Uterus (tissue), 4 donors: ENCODE measurements at regions of chr14 and their contacts with region 1.

Region 1: GRCh38 chr14:76947078-76947837 is 81.2 kb downstream of the IRF2BPL start:
- DNase-seq: peak; percentile 84 to 85
- H3K4me3 ChIP-seq: no peak overlapping the region
- H3K27ac ChIP-seq: peak overlapping the region; percentile 69 to 79
- H3K4me1 ChIP-seq: peaks cover 0 to 16% of the 10 kb centered on the region in 2 donors
- H3K27me3 ChIP-seq: no peaks in the 10 kb centered on the region
- CTCF ChIP-seq: peak; percentile 47 to 64 (median 52)
- POLR2A ChIP-seq: peak in 1 of 2 donors; percentile 8

Region 2: DNA sequence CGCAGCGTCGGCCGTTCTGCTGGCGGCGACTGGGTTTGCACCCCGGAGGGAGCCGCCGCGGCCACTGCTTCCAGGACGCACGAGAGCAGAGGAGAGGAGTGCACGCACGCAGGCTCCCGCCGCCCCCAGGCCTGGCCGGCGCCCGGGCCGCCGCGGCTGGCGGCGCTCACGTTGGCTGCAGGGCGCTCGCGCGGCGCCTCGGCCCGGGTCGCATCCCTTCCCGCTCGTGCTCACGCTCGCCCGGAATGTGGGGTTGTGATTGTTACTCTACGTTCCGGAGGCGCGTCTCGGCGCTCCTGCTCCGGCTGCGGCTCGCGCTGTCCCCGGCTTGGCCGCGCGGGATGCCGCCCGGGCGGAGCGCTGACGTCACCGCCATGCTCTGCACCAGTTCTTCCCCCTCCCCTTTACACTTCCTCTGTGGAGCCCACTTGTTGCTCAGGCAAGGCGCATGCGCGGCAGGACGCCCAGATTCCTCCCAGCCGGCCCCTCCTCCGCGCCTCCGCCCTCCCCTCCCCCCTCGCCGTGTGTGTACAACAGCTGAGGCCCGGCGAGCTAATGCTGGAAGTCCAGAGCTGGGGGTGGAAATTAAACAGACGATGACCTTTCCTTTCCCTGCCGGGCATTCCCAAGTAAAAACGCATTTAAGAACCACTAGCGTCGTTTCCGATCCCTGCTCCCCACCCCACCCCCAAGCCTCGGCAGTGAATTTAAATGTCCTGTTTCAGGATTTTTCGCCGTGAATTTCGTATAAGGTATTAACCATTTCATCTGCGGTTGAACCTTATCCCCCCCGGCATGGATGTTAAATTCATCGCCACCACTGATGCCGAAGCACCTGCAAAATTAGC is 81.3 kb after region 1 on chr14 and contains the start of gene IRF2BPL:
- intact Hi-C with region 1: loop called (anchors 5 kb)
- DNase-seq: peak; percentile 99
- H3K4me3 ChIP-seq: peak within 1 kb of the TSS; percentile 77 to 89
- H3K27ac ChIP-seq: peak within 1 kb of the TSS; percentile 98 to 100
- H3K4me1 ChIP-seq: peaks cover 14 to 36% of the 10 kb centered on the region in 2 donors
- H3K27me3 ChIP-seq: no peaks in the 10 kb centered on the region
- CTCF ChIP-seq: no peak
- POLR2A ChIP-seq: peak; percentile 90 to 99
- total RNA-seq, gene IRF2BPL: 15.6 to 60.8 (median 36.6) TPM

Region 3: DNA sequence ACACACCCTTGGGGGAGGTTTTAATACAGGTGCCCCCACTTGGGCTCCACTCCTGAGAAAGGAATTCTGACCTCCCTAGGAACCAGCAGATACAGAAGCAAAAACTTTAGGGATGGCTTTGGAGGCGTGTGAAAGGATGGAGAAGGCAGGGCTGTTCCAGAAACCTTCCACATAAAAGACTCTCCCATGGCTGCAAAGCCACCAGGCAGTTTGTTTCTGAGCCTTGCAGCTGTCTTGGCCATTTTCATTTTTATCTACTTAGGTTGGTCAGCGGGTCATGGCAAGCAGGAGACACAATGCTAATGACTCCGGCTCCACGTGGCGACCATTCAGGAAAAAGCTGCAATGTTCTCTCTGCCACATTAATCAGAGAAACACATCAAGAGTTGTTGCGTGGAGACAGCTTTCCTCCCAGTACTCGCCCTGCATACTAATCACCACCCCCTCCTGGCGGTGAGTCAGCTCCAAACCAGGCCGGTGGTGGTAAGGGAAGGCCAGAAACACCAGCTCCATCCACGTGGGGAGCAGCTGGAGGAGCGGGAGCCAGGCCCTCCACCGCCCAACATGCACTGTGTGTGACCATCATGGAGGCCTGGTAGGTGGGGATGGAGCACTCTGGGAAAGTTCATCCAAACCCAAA is 112.1 kb after region 1 on chr14:
- intact Hi-C with region 1: no loop called
- DNase-seq: peak in 1 of 2 donors; percentile 49
- H3K4me3 ChIP-seq: no peak overlapping the region
- H3K27ac ChIP-seq: no peak overlapping the region
- H3K4me1 ChIP-seq: no peaks in the 10 kb centered on the region
- H3K27me3 ChIP-seq: no peaks in the 10 kb centered on the region
- CTCF ChIP-seq: peak in 1 of 4 experiments; percentile 6
- POLR2A ChIP-seq: no peak

Region 4: GRCh38 chr14:77124345-77125280 is 177.4 kb after region 1 on chr14:
- intact Hi-C with region 1: no loop called
- DNase-seq: peak in 1 of 2 donors; percentile 46
- H3K4me3 ChIP-seq: peak overlapping the region; percentile 28 to 44
- H3K27ac ChIP-seq: no peak overlapping the region
- H3K4me1 ChIP-seq: peaks cover 0 to 8% of the 10 kb centered on the region in 2 donors
- H3K27me3 ChIP-seq: no peaks in the 10 kb centered on the region
- CTCF ChIP-seq: peak; percentile 21 to 84 (median 66)
- POLR2A ChIP-seq: no peak

Region 5: GRCh38 chr14:77158175-77158891 is 211.1 kb after region 1 on chr14:
- intact Hi-C with region 1: no loop called
- DNase-seq: no peak
- H3K4me3 ChIP-seq: no peak overlapping the region
- H3K27ac ChIP-seq: no peak overlapping the region
- H3K4me1 ChIP-seq: no peaks in the 10 kb centered on the region
- H3K27me3 ChIP-seq: peaks cover 0 to 3% of the 10 kb centered on the region in 2 donors
- CTCF ChIP-seq: no peak
- POLR2A ChIP-seq: no peak